Activated B cell treated with CpG ODN at 0.5 μM for 24 hours (primary cell): ENCODE measurements at regions of chr11 and their contacts with region 1.

Region 1: DNA sequence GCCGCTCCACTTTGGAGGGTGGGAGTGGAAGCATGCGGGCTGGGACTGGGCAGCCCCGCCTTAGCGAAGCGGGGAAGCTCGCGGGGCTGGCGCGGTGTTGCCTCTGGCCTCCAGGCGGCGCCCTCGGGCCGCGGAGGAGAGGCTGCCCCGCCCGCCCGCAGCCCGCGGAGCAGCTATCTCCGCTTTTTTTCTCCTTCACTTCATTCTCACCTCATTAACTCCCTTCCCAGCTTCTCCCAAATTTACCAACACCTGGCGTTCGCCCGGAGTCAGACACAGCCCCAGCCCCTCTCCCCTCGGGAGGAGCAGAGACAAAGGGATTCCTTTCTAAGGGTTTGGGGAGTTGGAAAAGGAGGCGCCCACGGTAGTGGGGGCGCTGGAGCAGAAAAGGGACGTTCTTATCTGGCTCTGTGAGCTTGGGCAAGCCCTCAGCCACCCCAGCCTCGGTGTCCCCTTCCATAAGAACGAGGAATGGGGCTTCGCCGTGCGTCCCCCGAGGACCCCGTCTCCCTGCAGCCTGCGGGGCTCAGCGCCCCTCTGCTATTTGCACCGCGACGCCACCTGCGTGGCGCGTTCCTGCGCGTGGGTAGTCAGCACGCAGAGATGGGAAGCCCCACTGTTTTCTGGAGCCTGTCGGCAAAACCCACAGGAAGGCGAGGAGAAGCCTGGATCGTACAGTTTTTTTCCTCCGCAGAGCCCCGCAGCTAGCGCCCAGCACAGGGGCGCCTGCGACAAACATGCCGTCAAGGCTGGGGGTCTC is 1.5 kb upstream of the WNT11 start:
- DNase-seq: peak; percentile 80
- ATAC-seq: peak; percentile 76
- H3K4me3 Mint-ChIP-seq: peak overlapping the region; percentile 86
- H3K27ac Mint-ChIP-seq: no peak overlapping the region
- H3K4me1 Mint-ChIP-seq: peaks cover 23% of the 10 kb centered on the region
- H3K27me3 Mint-ChIP-seq: peaks cover 40% of the 10 kb centered on the region
- CTCF ChIP-seq: peak; percentile 78

Region 2: DNA sequence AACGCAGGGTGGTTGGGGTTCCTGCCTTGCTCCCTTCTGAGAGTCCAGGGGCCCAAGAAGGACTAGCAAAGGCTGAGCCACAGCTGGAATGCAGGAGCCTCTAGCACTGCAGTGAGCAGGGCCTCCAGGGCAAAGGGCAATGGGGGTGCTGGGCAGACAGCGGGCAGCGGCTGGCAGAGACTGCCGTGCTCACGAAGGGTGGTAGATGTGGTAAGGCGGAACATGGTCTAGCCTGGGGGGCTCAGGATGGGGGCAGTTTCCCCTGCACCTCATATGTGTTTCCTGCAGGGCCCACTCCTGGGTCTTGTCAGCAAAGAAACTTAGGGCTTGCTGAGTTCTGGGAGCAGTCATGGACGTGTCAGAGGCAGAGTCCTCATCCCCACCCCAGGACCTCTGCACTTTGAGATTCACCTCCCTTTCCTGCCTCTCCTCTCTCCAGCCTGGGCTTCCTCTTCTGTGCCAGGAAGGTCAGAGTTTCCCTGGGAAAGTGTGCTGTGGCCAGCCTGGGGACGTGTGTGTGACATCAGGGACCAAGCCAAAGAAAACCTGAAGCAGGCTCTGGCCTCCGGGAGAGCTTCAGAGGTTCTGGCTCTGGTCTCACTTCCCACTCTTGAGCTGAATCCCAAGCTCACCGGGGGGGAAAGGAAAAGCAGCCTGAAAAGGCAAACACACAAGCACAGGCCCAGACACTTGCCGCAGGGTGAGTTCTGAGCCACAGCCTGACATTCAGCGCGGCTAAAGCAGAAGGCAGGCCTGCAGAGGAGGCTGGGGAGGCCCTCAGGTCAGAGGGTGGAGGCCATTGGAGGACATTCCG is 485.8 kb before region 1 on chr11:
- CTCF ChIA-PET with region 1: no interaction called
- POLR2A ChIA-PET with region 1: no interaction called
- intact Hi-C with region 1: loop called (anchors 5 kb)
- DNase-seq: no peak
- ATAC-seq: no peak
- H3K4me3 Mint-ChIP-seq: no peak overlapping the region
- H3K27ac Mint-ChIP-seq: no peak overlapping the region
- H3K4me1 Mint-ChIP-seq: no peaks in the 10 kb centered on the region
- H3K27me3 Mint-ChIP-seq: no peaks in the 10 kb centered on the region
- CTCF ChIP-seq: no peak

Region 3: GRCh38 chr11:76131671-76132631 is 75.9 kb before region 1 on chr11:
- CTCF ChIA-PET with region 1: no interaction called
- POLR2A ChIA-PET with region 1: no interaction called
- intact Hi-C with region 1: no loop called
- DNase-seq: no peak
- ATAC-seq: no peak
- H3K4me3 Mint-ChIP-seq: no peak overlapping the region
- H3K27ac Mint-ChIP-seq: peak overlapping the region; percentile 24
- H3K4me1 Mint-ChIP-seq: peaks cover 2% of the 10 kb centered on the region
- H3K27me3 Mint-ChIP-seq: no peaks in the 10 kb centered on the region
- CTCF ChIP-seq: no peak

Region 4: DNA sequence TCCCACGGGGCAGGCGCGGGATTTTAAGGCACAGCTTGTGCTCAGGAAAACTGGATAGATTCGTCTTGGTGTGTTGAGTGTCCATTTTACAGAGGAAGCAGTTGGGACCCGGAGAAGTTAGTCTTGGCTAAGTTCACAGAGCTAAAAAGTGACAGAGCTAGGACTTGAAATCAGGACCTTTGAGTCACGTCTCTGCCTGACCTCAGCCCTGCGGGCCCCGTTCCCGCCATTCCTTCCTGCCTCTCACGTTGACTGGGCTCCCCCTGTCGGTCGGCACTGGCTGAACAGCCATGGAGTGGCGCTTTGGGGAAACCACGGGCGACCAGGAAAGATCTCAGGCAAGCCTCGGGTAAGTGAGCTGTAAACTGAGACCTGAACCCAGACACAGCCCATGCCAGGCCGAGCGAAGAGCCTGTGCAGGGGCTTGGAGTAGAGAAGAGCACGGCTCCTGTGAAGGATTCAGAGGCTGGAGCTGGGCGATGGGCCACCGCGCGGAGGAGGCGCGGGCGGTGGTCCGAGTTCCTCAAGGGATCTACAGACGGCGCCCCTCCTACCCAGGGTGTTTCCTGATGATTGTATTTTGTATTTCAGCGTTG is 55.6 kb before region 1 on chr11:
- CTCF ChIA-PET with region 1: interaction called, 6 read pairs
- POLR2A ChIA-PET with region 1: no interaction called
- intact Hi-C with region 1: loop called (anchors 5 kb)
- DNase-seq: peak; percentile 68
- ATAC-seq: peak; percentile 88
- H3K4me3 Mint-ChIP-seq: peak overlapping the region; percentile 80
- H3K27ac Mint-ChIP-seq: peak overlapping the region; percentile 41
- H3K4me1 Mint-ChIP-seq: peaks cover 22% of the 10 kb centered on the region
- H3K27me3 Mint-ChIP-seq: no peaks in the 10 kb centered on the region
- CTCF ChIP-seq: no peak

Region 5: GRCh38 chr11:76248210-76248609 is 40.4 kb after region 1 on chr11:
- CTCF ChIA-PET with region 1: no interaction called
- POLR2A ChIA-PET with region 1: no interaction called
- intact Hi-C with region 1: no loop called
- DNase-seq: no peak
- ATAC-seq: no peak
- H3K4me3 Mint-ChIP-seq: no peak overlapping the region
- H3K27ac Mint-ChIP-seq: no peak overlapping the region
- H3K4me1 Mint-ChIP-seq: no peaks in the 10 kb centered on the region
- H3K27me3 Mint-ChIP-seq: peaks cover 9% of the 10 kb centered on the region
- CTCF ChIP-seq: no peak

Region 6: GRCh38 chr11:76318744-76319384 is 111.0 kb after region 1 on chr11:
- CTCF ChIA-PET with region 1: interaction called, 103 read pairs
- POLR2A ChIA-PET with region 1: interaction called, 5 read pairs
- intact Hi-C with region 1: loop called (anchors 1 kb)
- DNase-seq: peak; percentile 73
- ATAC-seq: peak; percentile 97
- H3K4me3 Mint-ChIP-seq: no peak overlapping the region
- H3K27ac Mint-ChIP-seq: no peak overlapping the region
- H3K4me1 Mint-ChIP-seq: peaks cover 2% of the 10 kb centered on the region
- H3K27me3 Mint-ChIP-seq: peaks cover 40% of the 10 kb centered on the region
- CTCF ChIP-seq: no peak

Region 7: DNA sequence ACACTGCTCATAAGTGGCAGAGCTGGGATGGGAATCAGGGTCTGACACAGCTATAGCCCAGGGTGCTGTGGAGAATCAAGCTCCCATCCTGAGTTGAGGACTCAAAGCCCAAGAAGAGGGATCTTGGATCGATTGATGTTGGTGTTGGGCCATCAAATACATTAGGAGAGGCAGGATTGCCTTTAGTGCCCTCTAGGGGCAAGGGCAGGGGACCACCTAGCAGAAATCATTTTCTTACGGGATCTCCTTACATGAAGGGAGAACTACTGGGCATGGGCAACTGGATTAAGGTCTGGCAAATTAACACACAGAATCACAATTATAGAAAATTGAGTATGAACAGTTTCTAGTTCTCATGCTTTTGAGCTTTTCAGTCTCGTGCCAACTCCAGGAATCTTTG is 212.1 kb after region 1 on chr11:
- CTCF ChIA-PET with region 1: interaction called, 6 read pairs
- POLR2A ChIA-PET with region 1: no interaction called
- intact Hi-C with region 1: loop called (anchors 1 kb)
- DNase-seq: no peak
- ATAC-seq: no peak
- H3K4me3 Mint-ChIP-seq: no peak overlapping the region
- H3K27ac Mint-ChIP-seq: no peak overlapping the region
- H3K4me1 Mint-ChIP-seq: peaks cover 4% of the 10 kb centered on the region
- H3K27me3 Mint-ChIP-seq: no peaks in the 10 kb centered on the region
- CTCF ChIP-seq: no peak

Region 8: GRCh38 chr11:76512851-76513653 is 305.2 kb after region 1 on chr11:
- CTCF ChIA-PET with region 1: interaction called, 6 read pairs
- POLR2A ChIA-PET with region 1: no interaction called
- intact Hi-C with region 1: loop called (anchors 2 kb)
- DNase-seq: no peak
- ATAC-seq: no peak
- H3K4me3 Mint-ChIP-seq: no peak overlapping the region
- H3K27ac Mint-ChIP-seq: no peak overlapping the region
- H3K4me1 Mint-ChIP-seq: no peaks in the 10 kb centered on the region
- H3K27me3 Mint-ChIP-seq: no peaks in the 10 kb centered on the region
- CTCF ChIP-seq: no peak